Right cardiac atrium (tissue), 5 donors: ENCODE measurements at regions of chr17 and their contacts with region 1.

Region 1: GRCh38 chr17:75940724-75941441 is at the start of gene FBF1:
- DNase-seq: peak; percentile 96 to 98 (median 98)
- ATAC-seq: peak; percentile 99
- H3K4me3 ChIP-seq: peak within 1 kb of the TSS; percentile 64
- H3K27ac ChIP-seq: peak within 1 kb of the TSS; percentile 23
- H3K4me1 ChIP-seq: no peaks in the 10 kb centered on the region
- H3K27me3 ChIP-seq: no peaks in the 10 kb centered on the region
- total RNA-seq, gene FBF1: 4.8 to 5.5 (median 5.1) TPM

Region 2: DNA sequence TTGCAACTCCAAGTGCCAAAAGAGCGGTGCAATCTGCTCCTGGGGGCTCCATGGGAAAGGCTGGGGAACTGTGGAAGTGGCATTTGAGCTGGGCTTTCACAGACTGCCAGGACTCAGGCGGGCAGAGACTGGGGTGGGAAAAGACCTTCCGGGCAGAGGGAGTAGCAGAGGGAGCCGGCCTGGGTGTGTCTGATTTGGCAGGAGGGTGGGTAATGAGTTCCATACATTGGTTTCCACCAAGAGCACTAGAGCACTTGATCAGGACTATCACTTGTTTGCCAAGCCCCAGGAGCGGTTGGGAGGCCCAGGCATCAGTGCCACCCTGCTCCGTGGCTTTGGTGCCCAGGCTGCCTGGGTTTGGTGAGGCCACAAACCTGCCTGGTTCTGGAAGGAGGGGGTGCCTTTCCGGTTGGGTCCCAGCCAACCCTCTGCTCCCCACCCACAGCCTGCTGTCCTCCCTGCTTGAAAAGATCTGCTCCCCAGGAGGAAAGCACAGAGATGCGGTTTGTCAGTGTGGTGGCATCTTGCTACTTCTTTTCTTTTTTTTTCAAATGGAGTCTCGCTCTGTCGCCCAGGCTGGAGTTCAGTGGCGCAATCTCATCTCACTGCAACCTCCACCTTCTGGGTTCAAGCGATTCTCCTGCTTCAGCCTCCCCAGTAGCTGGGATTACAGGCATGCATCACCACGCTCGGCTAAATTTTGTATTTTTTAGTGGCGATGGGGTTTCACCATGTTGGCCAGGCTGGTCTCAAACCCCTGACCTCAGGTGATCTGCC is 59.0 kb before region 1 on chr17:
- intact Hi-C with region 1: no loop called
- DNase-seq: no peak
- ATAC-seq: no peak
- H3K4me3 ChIP-seq: no peak overlapping the region
- H3K27ac ChIP-seq: no peak overlapping the region
- H3K4me1 ChIP-seq: peaks cover 3% of the 10 kb centered on the region
- H3K27me3 ChIP-seq: no peaks in the 10 kb centered on the region

Region 3: GRCh38 chr17:75896415-75897159 is 44.3 kb before region 1 on chr17 and contains the start of gene TRIM65:
- intact Hi-C with region 1: no loop called
- DNase-seq: peak; percentile 91 to 96 (median 95)
- ATAC-seq: peak; percentile 80 to 87
- H3K4me3 ChIP-seq: peak within 1 kb of the TSS; percentile 60
- H3K27ac ChIP-seq: peak within 1 kb of the TSS; percentile 90
- H3K4me1 ChIP-seq: no peaks in the 10 kb centered on the region
- H3K27me3 ChIP-seq: no peaks in the 10 kb centered on the region
- total RNA-seq, gene TRIM65: 5.7 to 10.7 (median 7.7) TPM

Region 4: DNA sequence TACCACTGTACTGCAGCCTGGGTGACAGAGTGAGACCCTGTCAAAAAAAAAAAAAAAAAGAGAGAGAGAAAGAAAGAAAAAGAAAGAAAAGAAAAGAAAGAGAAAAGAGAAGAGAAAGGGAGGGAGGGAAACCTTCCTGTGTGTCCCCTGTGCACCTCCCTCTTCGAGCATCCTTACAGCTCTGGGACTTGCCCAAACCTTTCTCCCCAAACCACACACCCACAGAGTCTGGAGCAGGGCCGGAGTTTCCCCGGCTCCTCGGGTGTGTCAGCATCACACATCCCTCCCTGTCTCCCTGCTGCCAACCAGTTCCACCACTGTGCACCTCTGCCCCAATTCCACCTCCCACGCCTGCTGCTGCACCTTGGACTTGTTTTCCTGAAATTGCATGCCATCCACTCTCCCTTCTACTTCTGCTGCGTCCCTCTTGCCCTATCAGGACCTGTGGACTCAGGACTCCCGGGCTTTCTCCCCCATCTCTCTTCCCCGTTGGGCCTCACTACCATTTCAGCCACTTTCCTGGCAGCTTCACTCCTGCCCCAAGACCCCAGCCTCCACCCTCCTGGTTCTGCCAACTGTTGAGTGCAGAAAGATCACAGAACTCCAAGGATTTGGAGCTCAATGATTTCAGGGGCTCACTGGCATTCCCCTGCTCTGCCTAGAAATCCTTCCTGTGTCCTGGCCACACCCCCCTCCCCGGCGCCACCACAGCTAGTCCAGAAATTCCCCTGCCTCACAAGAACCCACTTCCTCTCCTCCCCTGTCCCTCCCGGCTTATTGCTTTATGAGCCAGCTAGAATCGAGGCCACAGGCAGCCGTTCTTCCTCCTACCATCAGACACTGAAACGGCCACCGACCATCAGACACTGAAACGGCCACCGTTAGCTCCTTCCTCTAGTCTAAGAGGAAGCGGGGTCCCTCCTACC is 56.0 kb after region 1 on chr17:
- intact Hi-C with region 1: loop called in 1 of 4 experiments (anchors 10 kb)
- DNase-seq: peak in 1 of 3 donors; percentile 78
- ATAC-seq: peak; percentile 53 to 61
- H3K4me3 ChIP-seq: no peak overlapping the region
- H3K27ac ChIP-seq: no peak overlapping the region
- H3K4me1 ChIP-seq: peaks cover 3% of the 10 kb centered on the region
- H3K27me3 ChIP-seq: no peaks in the 10 kb centered on the region